ENCODE measurements at regions of chr10 and their contacts with region 1.

Region 1: DNA sequence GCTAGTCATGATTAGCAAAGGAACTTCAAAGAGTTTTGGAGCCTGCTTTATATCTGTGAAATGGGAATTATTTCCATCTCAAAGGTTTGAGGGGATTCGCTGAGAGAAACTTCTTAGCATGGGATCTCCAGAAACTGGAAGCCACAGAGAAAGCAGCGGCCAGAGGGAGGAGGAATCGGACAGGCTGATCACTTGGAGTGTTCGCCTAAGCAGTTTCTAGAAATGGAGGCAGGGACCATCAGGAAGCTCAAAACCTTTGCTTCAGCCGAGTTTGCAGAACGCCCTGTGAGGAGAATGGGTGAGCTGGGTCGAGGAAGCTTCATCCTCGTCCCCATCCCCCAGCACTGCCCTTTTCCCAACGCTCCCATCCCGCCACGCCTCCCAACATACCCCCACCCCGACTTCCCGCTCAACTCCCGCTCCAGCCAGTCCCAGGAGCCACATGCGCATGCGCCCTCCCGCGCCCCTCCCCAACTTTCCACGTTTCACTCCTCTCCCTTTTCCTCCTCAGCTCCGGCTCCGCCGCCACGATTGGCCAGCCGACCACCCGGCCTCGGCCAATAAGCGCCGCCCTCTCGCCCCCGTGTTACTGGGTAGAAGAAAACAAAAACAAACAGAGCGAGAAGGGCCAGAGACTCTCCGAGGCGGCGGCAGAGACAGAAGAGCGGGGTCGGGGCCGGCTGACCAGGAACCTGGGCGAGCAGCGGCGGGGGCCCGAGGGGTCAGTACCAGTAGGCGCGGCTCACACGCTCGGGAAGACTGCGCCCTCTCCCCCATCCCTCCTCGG is at the start of gene PDCD4:
- DNase-seq: peak; percentile 99 to 100 (median 100)
- H3K4me3 ChIP-seq: peak within 1 kb of the TSS; percentile 62 to 95 (median 90)
- H3K27ac ChIP-seq: peak within 1 kb of the TSS in 4 of 5 donors; percentile 87 to 98 (median 93)
- H3K4me1 ChIP-seq: peaks cover 17 to 33% of the 10 kb centered on the region in 2 donors
- H3K27me3 ChIP-seq: no peaks in the 10 kb centered on the region
- CTCF ChIP-seq: no peak
- POLR2A ChIP-seq: peak; percentile 74 to 94
- total RNA-seq, gene PDCD4: 16.8 to 150 (median 42.6) TPM

Region 2: DNA sequence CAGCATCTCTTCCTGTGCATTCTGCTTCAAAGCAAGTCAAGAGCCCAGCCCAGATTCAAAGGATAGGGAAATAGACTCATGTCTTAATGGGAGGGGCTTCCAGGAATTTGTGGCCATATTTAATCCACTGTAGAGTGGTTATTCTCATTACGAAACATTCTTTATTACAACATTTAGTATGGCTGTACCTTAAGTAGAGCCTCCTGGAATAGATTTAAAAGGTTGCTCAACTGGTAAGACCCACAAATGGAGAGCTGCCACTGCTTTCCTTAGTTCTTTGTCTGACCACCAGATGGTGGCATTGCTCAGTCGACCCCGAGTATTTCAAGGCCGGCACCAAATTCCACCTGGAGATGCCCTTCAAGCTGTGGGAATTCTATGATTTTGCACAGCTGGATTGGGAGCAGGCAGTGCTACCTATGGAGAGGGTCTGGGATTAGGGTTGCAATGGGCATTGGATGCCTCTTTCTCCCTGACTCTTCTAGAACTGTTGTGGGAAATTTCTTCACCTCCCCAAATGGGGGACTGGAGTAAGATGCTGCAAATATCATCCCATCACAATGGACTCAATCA is 125.2 kb before region 1 on chr10:
- intact Hi-C with region 1: no loop called
- DNase-seq: peak; percentile 49 to 84 (median 55)
- H3K4me3 ChIP-seq: no peak overlapping the region
- H3K27ac ChIP-seq: no peak overlapping the region
- H3K4me1 ChIP-seq: no peaks in the 10 kb centered on the region
- H3K27me3 ChIP-seq: no peaks in the 10 kb centered on the region
- CTCF ChIP-seq: peak; percentile 53 to 86 (median 77)
- POLR2A ChIP-seq: no peak

Region 3: DNA sequence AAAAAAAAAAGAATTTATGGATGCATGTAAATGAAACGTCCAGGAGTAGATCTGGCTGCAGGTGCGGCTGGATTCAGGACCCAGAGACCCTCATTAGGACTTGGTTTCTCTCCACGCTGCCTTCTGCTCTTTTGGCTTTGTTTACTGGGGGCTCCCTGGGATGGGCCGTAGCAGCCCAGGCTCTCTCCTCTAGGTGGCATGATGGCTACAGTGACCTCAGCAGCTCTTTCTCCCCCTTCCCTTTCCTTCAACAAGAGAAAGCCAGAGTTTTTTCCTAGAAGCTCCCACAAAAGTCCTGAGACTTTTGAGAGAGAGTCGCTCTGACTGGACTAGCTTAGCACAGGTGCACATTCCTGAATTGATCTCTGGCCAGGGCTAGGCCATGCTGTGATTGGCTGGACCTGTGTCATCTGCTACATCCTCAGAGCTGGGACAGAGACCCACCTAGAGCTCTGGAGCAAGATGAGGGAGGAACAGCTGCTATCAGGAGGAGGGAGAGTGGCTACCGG is 67.6 kb before region 1 on chr10:
- intact Hi-C with region 1: loop called in 1 of 2 experiments (anchors 2 kb)
- DNase-seq: peak in 6 of 7 donors; percentile 47 to 79 (median 66)
- H3K4me3 ChIP-seq: no peak overlapping the region
- H3K27ac ChIP-seq: no peak overlapping the region
- H3K4me1 ChIP-seq: peaks cover 0 to 8% of the 10 kb centered on the region in 2 donors
- H3K27me3 ChIP-seq: no peaks in the 10 kb centered on the region
- CTCF ChIP-seq: peak; percentile 36 to 78 (median 66)
- POLR2A ChIP-seq: no peak

Measured in adrenal gland (tissue), 19 donors.